Activated CD4-positive, alpha-beta memory T cell treated with anti-CD3 and anti-CD28 coated beads for 36 hours (primary cell): ENCODE measurements at regions of chr12 and their contacts with region 1.

Region 1: GRCh38 chr12:94644141-94644979 is 6.0 kb downstream of the TMCC3 start:
- DNase-seq: peak; percentile 24
- H3K4me3 Mint-ChIP-seq: no peak overlapping the region
- H3K27ac Mint-ChIP-seq: peak overlapping the region; percentile 65
- H3K4me1 Mint-ChIP-seq: peaks cover 37% of the 10 kb centered on the region
- H3K27me3 Mint-ChIP-seq: peaks cover 48% of the 10 kb centered on the region

Region 2: GRCh38 chr12:94262228-94263010 is 381.9 kb before region 1 on chr12:
- CTCF ChIA-PET with region 1: no interaction called
- POLR2A ChIA-PET with region 1: no interaction called
- intact Hi-C with region 1: loop called (anchors 2 kb)
- DNase-seq: peak; percentile 85
- H3K4me3 Mint-ChIP-seq: peak overlapping the region; percentile 88
- H3K27ac Mint-ChIP-seq: peak overlapping the region; percentile 98
- H3K4me1 Mint-ChIP-seq: peaks cover 37% of the 10 kb centered on the region
- H3K27me3 Mint-ChIP-seq: no peaks in the 10 kb centered on the region

Region 3: DNA sequence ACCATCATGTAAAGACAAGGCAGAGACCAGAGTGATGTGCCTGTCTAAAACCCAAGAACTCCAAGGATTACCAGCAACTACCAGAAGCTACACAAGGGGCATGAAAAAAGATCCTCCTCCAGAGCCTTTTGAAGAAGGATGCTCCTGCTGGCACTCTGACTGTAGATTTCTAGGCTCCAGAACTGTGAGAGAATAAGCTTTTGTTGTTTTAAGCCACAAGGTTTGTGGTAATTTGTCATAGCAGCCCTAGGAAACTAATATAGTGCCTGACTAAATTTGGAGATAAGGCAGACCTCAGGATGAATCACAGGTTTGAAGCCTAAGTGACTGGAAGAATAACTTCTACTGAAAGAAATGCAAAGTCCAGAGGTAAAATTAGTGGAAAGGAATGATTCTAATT is 317.6 kb before region 1 on chr12:
- CTCF ChIA-PET with region 1: no interaction called
- POLR2A ChIA-PET with region 1: no interaction called
- intact Hi-C with region 1: loop called (anchors 5 kb)
- DNase-seq: peak; percentile 20
- H3K4me3 Mint-ChIP-seq: no peak overlapping the region
- H3K27ac Mint-ChIP-seq: peak overlapping the region; percentile 8
- H3K4me1 Mint-ChIP-seq: peaks cover 24% of the 10 kb centered on the region
- H3K27me3 Mint-ChIP-seq: no peaks in the 10 kb centered on the region

Region 4: GRCh38 chr12:94459728-94460615 is 184.4 kb before region 1 on chr12 and contains the start of gene CEP83:
- CTCF ChIA-PET with region 1: no interaction called
- POLR2A ChIA-PET with region 1: no interaction called
- intact Hi-C with region 1: loop called (anchors 2 kb)
- DNase-seq: peak; percentile 98
- H3K4me3 Mint-ChIP-seq: peak within 1 kb of the TSS; percentile 82
- H3K27ac Mint-ChIP-seq: peak within 1 kb of the TSS; percentile 92
- H3K4me1 Mint-ChIP-seq: peaks cover 31% of the 10 kb centered on the region
- H3K27me3 Mint-ChIP-seq: peaks cover 7% of the 10 kb centered on the region
- total RNA-seq, gene CEP83: 23.4 TPM

Region 5: GRCh38 chr12:94621664-94622359 is 22.5 kb before region 1 on chr12:
- CTCF ChIA-PET with region 1: interaction called, 9 read pairs
- POLR2A ChIA-PET with region 1: interaction called, 4 read pairs
- intact Hi-C with region 1: loop called (anchors 1 kb)
- DNase-seq: peak; percentile 67
- H3K4me3 Mint-ChIP-seq: peak overlapping the region; percentile 23
- H3K27ac Mint-ChIP-seq: peak overlapping the region; percentile 56
- H3K4me1 Mint-ChIP-seq: peaks cover 22% of the 10 kb centered on the region
- H3K27me3 Mint-ChIP-seq: no peaks in the 10 kb centered on the region

Region 6: DNA sequence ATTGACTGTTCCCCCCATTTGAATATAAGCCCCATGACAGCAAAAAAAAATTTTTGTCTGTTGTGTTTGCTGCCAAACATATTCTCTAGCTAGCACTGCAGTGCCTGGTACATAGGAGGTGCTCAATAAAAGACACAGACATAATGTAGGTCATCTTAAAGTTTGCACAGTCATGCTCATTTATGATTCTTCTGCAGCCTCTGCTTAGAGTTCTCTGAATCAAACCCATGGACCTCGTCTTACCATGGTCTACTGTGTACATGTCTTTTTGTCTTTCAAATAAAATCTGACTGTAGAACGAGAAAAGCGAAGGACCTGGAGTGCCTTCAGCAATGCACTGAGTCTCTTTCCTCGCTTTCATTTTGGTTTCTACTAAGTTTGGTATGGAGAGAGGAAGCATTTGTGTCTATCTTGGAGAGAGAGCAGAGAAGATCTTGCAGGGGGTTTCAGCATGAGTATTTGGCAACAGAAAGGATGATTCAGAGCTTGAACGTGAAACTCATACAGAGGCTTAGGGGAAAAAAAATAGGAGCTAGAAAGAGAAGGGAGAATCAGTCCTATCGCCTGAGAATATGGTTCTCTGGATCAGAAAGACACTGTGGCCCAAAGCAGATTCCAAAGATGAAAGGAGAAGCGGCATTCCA is 44.8 kb after region 1 on chr12:
- CTCF ChIA-PET with region 1: no interaction called
- POLR2A ChIA-PET with region 1: no interaction called
- intact Hi-C with region 1: loop called (anchors 5 kb)
- DNase-seq: no peak
- H3K4me3 Mint-ChIP-seq: no peak overlapping the region
- H3K27ac Mint-ChIP-seq: no peak overlapping the region
- H3K4me1 Mint-ChIP-seq: peaks cover 2% of the 10 kb centered on the region
- H3K27me3 Mint-ChIP-seq: peaks cover 5% of the 10 kb centered on the region

Region 7: DNA sequence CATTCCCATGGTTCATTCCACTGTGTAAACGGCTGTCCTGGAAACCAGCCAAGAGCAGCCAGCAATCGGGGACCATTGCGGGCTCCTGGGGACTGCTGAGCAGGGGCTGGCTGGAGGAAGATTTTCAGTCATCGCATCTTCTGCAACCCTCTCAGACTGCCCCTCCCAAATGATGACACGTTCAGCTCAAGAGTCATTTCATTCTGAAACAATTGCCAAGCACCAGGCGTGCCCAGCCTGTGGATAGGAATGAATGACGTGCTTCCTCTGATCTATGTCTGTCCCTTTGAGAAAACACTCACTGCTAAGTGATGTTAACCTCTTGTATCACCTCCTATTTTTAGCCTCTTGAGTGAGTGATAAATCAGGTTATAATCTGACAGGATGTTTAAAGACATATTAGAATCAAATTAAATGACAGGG is 297.1 kb after region 1 on chr12:
- CTCF ChIA-PET with region 1: no interaction called
- POLR2A ChIA-PET with region 1: no interaction called
- intact Hi-C with region 1: loop called (anchors 5 kb)
- DNase-seq: peak; percentile 82
- H3K4me3 Mint-ChIP-seq: no peak overlapping the region
- H3K27ac Mint-ChIP-seq: peak overlapping the region; percentile 63
- H3K4me1 Mint-ChIP-seq: peaks cover 39% of the 10 kb centered on the region
- H3K27me3 Mint-ChIP-seq: peaks cover 2% of the 10 kb centered on the region

Region 8: GRCh38 chr12:95277139-95277538 is 632.8 kb after region 1 on chr12:
- CTCF ChIA-PET with region 1: no interaction called
- POLR2A ChIA-PET with region 1: no interaction called
- intact Hi-C with region 1: no loop called
- DNase-seq: no peak
- H3K4me3 Mint-ChIP-seq: no peak overlapping the region
- H3K27ac Mint-ChIP-seq: no peak overlapping the region
- H3K4me1 Mint-ChIP-seq: no peaks in the 10 kb centered on the region
- H3K27me3 Mint-ChIP-seq: no peaks in the 10 kb centered on the region